Common myeloid progenitor, CD34-positive (primary cell): ENCODE measurements at regions of chr6 and their contacts with region 1.

Region 1: DNA sequence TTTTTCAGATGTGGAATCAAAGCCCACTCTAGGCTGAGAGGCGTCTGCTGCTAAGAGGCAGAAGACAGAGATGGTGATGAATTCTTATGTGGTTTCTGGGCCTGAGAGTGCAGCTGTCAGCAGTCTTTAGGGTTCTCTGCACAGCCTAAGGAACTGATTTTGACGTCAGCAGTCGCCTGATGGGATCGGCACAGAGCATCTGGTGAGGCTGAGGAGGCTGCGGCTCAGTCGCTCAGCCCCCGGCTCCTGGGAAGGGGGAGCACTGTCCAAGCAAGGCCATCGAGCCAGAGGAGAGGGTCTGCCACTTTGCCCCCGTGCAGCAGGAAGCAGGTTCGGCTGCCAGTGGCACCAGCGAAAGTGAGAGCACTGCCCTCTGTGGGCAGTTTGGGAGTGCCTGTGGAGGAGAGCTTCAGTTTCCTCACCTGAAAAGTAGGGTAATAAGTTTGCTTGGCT is 92.5 kb downstream of the TCP11 start:
- DNase-seq: peak; percentile 48 to 87 (median 80)
- H3K4me3 ChIP-seq: peak overlapping the region in 2 of 7 experiments; percentile 4 to 16
- H3K27ac ChIP-seq: peak overlapping the region; percentile 64 to 80
- H3K4me1 ChIP-seq: peaks cover 54 to 97% (median 92%) of the 10 kb centered on the region in 4 experiments
- H3K27me3 ChIP-seq: no peaks in the 10 kb centered on the region

Region 2: GRCh38 chr6:35062676-35063574 is 14.3 kb after region 1 on chr6:
- CTCF ChIA-PET with region 1: interaction called, 12 read pairs
- POLR2A ChIA-PET with region 1: no interaction called
- DNase-seq: peak; percentile 58 to 85 (median 81)
- H3K4me3 ChIP-seq: no peak overlapping the region
- H3K27ac ChIP-seq: no peak overlapping the region
- H3K4me1 ChIP-seq: peaks cover 0 to 27% (median 19%) of the 10 kb centered on the region in 4 experiments
- H3K27me3 ChIP-seq: no peaks in the 10 kb centered on the region